Sigmoid colon (tissue), 7 donors: ENCODE measurements at regions of chr10 and their contacts with region 1.

Region 1: GRCh38 chr10:22436884-22437619 is 91.8 kb downstream of the SPAG6 start:
- DNase-seq: peak; percentile 96
- H3K4me3 ChIP-seq: peak overlapping the region; percentile 56 to 82 (median 74)
- H3K27ac ChIP-seq: peak overlapping the region; percentile 95 to 98 (median 96)
- H3K4me1 ChIP-seq: peaks cover 0 to 18% (median 14%) of the 10 kb centered on the region in 4 donors
- H3K27me3 ChIP-seq: no peaks in the 10 kb centered on the region
- CTCF ChIP-seq: no peak
- EP300 ChIP-seq: no peak
- POLR2A ChIP-seq: peak; percentile 80 to 85

Region 2: DNA sequence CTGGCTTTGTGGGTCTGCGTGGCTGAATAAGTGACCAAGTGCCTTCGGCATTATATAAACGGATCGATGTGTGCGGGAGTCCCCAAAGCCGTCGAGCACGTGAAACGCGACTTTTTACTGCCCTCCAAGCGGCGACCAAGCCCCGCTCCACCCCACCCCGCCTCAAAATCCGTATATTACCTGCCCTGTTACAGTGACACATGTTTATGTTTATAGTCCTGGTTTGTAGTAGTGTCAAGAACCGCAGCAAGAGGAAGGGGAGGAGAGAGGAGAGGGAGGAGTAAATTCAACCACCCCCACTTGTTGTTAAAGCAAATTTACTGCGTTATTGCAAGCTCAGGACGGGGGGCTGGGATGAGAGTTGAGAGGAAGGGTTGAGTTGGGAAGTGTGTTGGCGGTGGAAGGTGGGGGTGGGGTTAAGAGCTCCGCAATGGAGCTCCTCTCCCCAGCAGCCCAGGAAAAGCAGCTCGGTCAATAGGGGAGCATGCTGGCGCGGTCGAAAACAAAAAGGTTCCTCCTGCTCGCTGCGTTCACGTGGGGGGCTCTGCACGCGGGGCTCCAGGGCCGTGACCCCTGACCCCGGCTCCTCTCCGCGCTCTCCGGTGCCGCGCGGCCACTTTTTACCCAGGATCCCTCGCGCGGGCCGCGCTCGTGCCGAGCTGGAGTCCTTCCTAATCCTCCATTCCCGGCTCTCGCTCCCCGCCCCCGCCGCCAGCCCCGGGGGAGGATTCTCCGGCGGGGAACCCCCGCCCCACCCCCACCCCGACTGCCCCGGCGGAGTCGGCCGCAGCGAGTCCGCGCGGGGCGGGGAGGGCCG is 911.5 kb before region 1 on chr10 and contains the start of gene SKIDA1:
- intact Hi-C with region 1: loop called (anchors 10 kb)
- DNase-seq: peak; percentile 93
- H3K4me3 ChIP-seq: peak within 1 kb of the TSS; percentile 49 to 74 (median 68)
- H3K27ac ChIP-seq: peak within 1 kb of the TSS; percentile 97 to 99 (median 98)
- H3K4me1 ChIP-seq: peaks cover 0 to 54% (median 28%) of the 10 kb centered on the region in 4 donors
- H3K27me3 ChIP-seq: no peaks in the 10 kb centered on the region
- CTCF ChIP-seq: no peak
- EP300 ChIP-seq: peak in 2 of 4 donors; percentile 17 to 42
- POLR2A ChIP-seq: no peak
- total RNA-seq, gene SKIDA1: 0.82 to 4.2 (median 3.4) TPM

Region 3: DNA sequence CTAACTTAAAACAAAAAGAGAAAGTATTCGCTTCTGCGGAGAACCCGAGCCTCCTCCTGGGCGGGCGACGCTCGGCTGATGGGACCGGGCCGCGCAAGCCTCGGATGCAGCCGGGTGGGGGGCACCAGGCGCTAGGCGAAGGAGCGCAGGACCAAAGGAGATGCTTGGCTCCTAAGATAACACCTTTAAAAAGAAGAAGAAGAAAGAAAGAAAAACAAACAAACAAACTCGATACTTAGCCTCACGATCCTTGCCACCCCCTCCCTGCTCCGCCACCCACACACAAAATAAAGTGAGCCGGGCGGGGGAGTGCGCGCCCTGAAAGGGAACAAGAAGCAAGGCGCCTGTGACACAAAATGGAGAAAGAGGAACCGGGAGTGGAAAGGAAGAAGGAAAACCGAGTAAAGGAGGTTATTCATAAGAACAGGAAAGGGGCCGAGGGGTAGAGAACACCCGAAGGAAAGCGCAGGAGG is 185.3 kb before region 1 on chr10:
- intact Hi-C with region 1: loop called (anchors 5 kb)
- DNase-seq: peak; percentile 79
- H3K4me3 ChIP-seq: peak overlapping the region; percentile 61 to 86 (median 74)
- H3K27ac ChIP-seq: peak overlapping the region; percentile 94 to 97 (median 96)
- H3K4me1 ChIP-seq: peaks cover 0 to 10% (median 5%) of the 10 kb centered on the region in 4 donors
- H3K27me3 ChIP-seq: no peaks in the 10 kb centered on the region
- CTCF ChIP-seq: no peak
- EP300 ChIP-seq: no peak
- POLR2A ChIP-seq: no peak

Region 4: DNA sequence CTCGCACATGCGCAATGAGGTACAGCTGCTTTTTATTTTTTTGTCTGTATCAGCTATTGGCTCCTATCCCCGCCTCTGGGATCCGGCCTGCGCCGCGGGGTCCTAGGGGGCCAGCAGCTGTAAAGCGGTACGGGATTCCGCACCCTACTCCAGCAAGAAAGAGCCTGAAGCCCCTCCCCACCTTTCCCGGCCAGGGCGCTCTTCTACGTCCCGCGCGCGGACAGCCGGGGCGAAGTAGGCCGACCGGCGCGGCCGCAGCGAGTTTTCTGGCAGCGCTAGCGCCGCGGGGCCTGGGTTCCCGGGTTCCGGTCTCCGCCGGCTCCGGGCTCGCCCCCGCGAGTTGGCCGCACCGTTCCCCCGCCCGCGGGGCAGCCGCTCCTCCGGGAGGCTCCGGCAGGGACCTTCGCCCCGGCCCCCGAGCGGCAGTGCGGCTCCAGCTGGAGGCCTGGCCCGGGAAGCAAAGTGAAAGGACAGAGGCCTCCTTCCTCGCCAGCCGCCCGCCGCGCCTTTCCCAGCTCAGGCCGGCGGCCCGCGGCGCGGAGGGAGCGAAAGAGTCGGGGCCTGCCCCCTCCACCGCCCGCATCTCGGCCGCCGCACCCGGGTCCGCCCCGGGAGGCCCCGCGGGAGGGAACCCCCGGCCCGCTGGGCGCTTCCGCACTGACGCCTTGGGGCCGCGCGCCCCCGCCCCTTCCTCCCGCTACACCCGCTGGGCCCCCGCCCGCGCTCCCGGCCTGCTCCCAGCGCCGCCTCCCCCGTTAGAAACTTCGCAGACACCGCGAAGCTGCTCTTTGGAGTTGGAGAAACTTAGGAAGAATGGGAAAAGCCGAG is 96.5 kb before region 1 on chr10:
- intact Hi-C with region 1: loop called (anchors 2 kb)
- DNase-seq: peak; percentile 82
- H3K4me3 ChIP-seq: peak overlapping the region; percentile 53 to 84 (median 72)
- H3K27ac ChIP-seq: peak overlapping the region; percentile 91 to 98 (median 96)
- H3K4me1 ChIP-seq: peaks cover 0 to 35% (median 30%) of the 10 kb centered on the region in 4 donors
- H3K27me3 ChIP-seq: peaks cover 75 to 89% (median 79%) of the 10 kb centered on the region in 3 donors
- CTCF ChIP-seq: no peak
- EP300 ChIP-seq: no peak
- POLR2A ChIP-seq: peak; percentile 34 to 37

Region 5: GRCh38 chr10:22414146-22414545 is 22.9 kb before region 1 on chr10:
- intact Hi-C with region 1: no loop called
- DNase-seq: no peak
- H3K4me3 ChIP-seq: no peak overlapping the region
- H3K27ac ChIP-seq: no peak overlapping the region
- H3K4me1 ChIP-seq: no peaks in the 10 kb centered on the region
- H3K27me3 ChIP-seq: no peaks in the 10 kb centered on the region
- CTCF ChIP-seq: no peak
- EP300 ChIP-seq: no peak
- POLR2A ChIP-seq: no peak

Region 6: GRCh38 chr10:22714479-22715289 is 277.6 kb after region 1 on chr10 and contains the start of gene PIP4K2A:
- intact Hi-C with region 1: loop called (anchors 5 kb)
- DNase-seq: peak; percentile 84
- H3K4me3 ChIP-seq: peak within 1 kb of the TSS; percentile 61 to 99 (median 90)
- H3K27ac ChIP-seq: peak within 1 kb of the TSS; percentile 86 to 91 (median 88)
- H3K4me1 ChIP-seq: peaks cover 0 to 36% (median 18%) of the 10 kb centered on the region in 4 donors
- H3K27me3 ChIP-seq: no peaks in the 10 kb centered on the region
- CTCF ChIP-seq: no peak
- EP300 ChIP-seq: no peak
- POLR2A ChIP-seq: no peak
- total RNA-seq, gene PIP4K2A: 16.6 to 23.2 (median 20.4) TPM

Region 7: DNA sequence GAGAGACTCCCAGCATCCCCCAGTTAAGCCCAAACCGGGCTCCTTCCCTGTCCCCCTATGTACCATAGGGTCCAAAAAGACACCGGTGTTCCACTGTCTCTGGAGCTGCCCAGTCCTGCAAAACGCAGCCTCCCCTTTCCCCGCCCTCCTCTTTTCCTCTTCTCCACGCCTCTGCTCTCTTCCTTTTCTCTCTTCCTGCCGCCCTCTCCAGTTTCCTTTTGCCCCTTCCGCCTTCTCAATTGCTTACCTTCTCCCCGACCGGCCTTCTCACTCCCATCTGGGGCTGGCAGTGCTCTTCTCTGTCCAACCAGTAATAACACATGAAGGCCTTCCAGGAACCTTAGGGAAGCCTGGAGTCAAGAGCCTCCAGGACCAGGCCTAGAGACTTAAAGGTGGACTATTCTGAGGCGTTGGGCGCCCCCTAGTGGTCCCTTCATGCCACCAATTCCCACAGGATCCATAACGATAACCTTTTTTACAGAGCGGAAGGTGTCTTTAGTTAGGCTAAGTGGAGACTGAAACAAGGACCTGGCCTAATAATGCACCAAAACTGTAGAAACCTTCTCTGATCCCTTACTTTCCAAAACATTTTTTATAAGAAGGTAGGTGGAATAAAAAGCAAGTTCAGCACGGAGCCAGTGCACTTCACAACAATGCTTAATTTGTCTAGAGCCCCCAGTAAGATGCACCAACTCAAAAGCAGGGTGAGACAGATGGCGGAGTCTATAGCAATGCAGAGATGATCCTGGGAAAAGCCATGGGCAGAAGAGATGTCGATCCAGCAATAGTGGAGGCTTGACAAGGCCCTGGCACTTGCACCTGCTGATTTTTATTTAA is 631.1 kb after region 1 on chr10:
- intact Hi-C with region 1: loop called (anchors 10 kb)
- DNase-seq: peak; percentile 90
- H3K4me3 ChIP-seq: no peak overlapping the region
- H3K27ac ChIP-seq: peak overlapping the region in 1 of 4 donors; percentile 29
- H3K4me1 ChIP-seq: peaks cover 0 to 36% (median 30%) of the 10 kb centered on the region in 4 donors
- H3K27me3 ChIP-seq: no peaks in the 10 kb centered on the region
- CTCF ChIP-seq: peak; percentile 26 to 82 (median 60)
- EP300 ChIP-seq: no peak
- POLR2A ChIP-seq: no peak